MCF 10A (cell line): ENCODE measurements at regions of chr3 and their contacts with region 1.

Region 1: GRCh38 chr3:171049861-171050444 is 23.4 kb upstream of the SLC2A2 start:
- DNase-seq: peak; percentile 77
- H3K4me3 Mint-ChIP-seq: no peak overlapping the region
- H3K27ac Mint-ChIP-seq: peak overlapping the region; percentile 11
- H3K4me1 Mint-ChIP-seq: peaks cover 8% of the 10 kb centered on the region
- H3K27me3 Mint-ChIP-seq: no peaks in the 10 kb centered on the region
- CTCF ChIP-seq: peak; percentile 79

Region 2: DNA sequence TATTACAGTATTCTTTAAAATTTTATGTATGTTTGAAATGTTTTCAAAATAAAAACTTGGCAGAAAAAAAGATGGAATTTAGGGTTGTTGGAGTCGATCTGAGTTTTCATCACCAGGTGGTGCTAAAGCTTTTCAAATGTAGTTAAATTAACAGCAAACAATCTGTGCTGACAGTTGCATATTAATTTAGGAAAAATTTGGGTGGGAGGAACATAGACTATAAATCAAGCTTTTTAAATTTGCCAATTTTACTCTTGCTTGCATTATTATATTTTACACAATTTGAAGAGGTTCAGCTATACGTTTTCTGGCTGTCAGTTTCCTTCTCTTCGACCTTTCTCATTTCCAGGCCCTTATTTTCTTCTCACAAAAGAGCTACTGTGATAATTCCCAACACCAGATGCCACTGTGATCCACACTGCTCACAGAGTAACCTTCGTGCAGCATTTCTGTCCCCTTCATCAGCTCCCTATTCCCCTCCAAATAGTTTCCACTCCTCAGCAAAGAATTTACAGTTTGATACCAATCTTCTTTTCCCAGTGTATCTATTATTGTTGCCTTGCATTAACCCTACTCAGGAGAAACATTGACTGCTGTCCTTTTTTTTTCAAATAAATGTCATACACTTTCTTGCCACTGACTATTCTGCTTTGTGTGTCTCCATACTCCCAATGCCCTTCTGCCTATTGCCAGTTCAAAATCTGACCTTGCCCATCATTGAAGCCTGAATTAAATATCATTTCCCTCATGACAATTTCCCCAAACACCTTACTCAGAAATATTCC is 88.1 kb before region 1 on chr3:
- CTCF ChIA-PET with region 1: interaction called, 6 read pairs
- POLR2A ChIA-PET with region 1: no interaction called
- intact Hi-C with region 1: loop called (anchors 1 kb)
- DNase-seq: peak; percentile 45
- H3K4me3 Mint-ChIP-seq: no peak overlapping the region
- H3K27ac Mint-ChIP-seq: no peak overlapping the region
- H3K4me1 Mint-ChIP-seq: no peaks in the 10 kb centered on the region
- H3K27me3 Mint-ChIP-seq: no peaks in the 10 kb centered on the region
- CTCF ChIP-seq: peak; percentile 76

Region 3: GRCh38 chr3:171162986-171163723 is 113.2 kb after region 1 on chr3:
- CTCF ChIA-PET with region 1: no interaction called
- POLR2A ChIA-PET with region 1: no interaction called
- intact Hi-C with region 1: loop called (anchors 1 kb)
- DNase-seq: peak; percentile 46
- H3K4me3 Mint-ChIP-seq: no peak overlapping the region
- H3K27ac Mint-ChIP-seq: no peak overlapping the region
- H3K4me1 Mint-ChIP-seq: peaks cover 10% of the 10 kb centered on the region
- H3K27me3 Mint-ChIP-seq: no peaks in the 10 kb centered on the region
- CTCF ChIP-seq: peak; percentile 51

Region 4: DNA sequence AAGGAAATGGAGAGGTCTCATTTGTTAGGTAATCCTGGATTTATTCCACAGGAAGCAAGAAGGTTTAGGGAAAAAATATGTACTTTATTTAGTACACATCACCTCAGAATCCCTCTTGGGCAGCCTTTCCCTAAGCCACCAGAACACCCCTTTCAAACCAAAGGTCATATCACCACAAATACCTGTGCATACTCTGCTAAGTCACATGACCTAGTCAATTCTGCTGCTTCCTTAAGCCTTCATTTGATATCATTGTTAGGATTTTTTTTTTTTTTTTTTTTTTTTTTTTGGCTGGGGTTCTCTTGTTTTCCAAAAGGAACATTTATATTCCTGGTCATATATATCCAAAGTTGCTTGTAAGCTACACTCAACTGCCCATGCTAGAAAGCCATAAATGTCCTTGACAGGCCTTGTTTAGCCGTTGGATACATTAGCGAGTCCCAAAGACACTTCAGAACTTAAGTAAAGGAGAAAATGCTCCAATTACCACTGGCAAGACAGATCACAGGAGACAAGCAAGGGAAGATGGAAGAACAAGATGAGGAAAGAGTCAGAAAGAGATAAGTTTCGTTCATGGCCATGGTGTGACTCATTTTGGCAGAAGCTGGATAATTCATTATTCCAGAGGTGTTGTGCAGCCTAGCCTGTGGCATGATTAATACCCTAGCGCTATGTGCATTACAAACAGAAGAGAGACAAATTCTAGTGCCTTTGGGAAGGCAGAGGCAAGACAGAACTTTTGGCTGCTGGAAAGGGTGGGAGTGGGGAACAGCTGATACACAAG is 132.1 kb after region 1 on chr3:
- CTCF ChIA-PET with region 1: no interaction called
- POLR2A ChIA-PET with region 1: no interaction called
- intact Hi-C with region 1: loop called (anchors 1 kb)
- DNase-seq: peak; percentile 64
- H3K4me3 Mint-ChIP-seq: no peak overlapping the region
- H3K27ac Mint-ChIP-seq: no peak overlapping the region
- H3K4me1 Mint-ChIP-seq: peaks cover 23% of the 10 kb centered on the region
- H3K27me3 Mint-ChIP-seq: no peaks in the 10 kb centered on the region
- CTCF ChIP-seq: no peak

Region 5: DNA sequence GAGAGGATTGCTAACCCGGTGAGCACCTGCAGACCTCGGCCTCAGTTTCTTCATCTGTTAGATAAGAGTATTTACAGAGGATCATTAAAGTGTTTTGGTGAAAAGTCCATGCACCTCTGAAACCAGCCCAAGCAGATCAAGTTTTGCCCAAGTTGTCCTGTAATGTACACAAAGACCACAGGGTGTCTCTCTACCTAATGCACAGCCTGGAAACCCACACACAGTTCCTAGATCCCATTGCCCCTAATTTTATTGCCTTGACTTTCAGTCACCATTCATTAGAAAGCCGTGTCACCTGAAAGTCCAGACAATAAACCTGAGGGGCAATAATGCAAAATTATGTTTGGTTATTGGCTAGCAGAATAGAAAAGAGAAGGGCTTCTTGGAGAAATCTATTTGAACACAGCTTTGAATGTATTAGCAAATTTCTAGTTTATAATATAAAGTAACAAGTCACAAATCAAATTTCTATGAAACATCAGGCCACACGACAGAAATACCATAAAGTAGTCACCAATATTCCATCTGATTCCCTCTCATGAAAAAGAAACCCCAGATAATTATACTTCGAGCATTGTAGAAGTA is 137.8 kb after region 1 on chr3:
- CTCF ChIA-PET with region 1: interaction called, 4 read pairs
- POLR2A ChIA-PET with region 1: no interaction called
- intact Hi-C with region 1: loop called (anchors 1 kb)
- DNase-seq: peak; percentile 60
- H3K4me3 Mint-ChIP-seq: no peak overlapping the region
- H3K27ac Mint-ChIP-seq: no peak overlapping the region
- H3K4me1 Mint-ChIP-seq: peaks cover 22% of the 10 kb centered on the region
- H3K27me3 Mint-ChIP-seq: no peaks in the 10 kb centered on the region
- CTCF ChIP-seq: peak; percentile 70